H1 (cell line): ENCODE measurements at regions of chr12 and their contacts with region 1.

Region 1: GRCh38 chr12:101951002-101951670 is 73.8 kb downstream of the DRAM1 start:
- DNase-seq: no peak
- H3K4me3 ChIP-seq: no peak overlapping the region
- H3K27ac ChIP-seq: no peak overlapping the region
- H3K4me1 ChIP-seq: no peaks in the 10 kb centered on the region
- H3K27me3 ChIP-seq: no peaks in the 10 kb centered on the region
- CTCF ChIP-seq: no peak
- EP300 ChIP-seq: no peak
- POLR2A ChIP-seq: no peak
- RAD21 ChIP-seq: no peak

Region 2: GRCh38 chr12:101939856-101940265 is 11.3 kb before region 1 on chr12:
- CTCF ChIA-PET with region 1: interaction called, 15 read pairs
- POLR2A ChIA-PET with region 1: no interaction called
- DNase-seq: peak; percentile 41 to 55
- H3K4me3 ChIP-seq: no peak overlapping the region
- H3K27ac ChIP-seq: no peak overlapping the region
- H3K4me1 ChIP-seq: no peaks in the 10 kb centered on the region
- H3K27me3 ChIP-seq: no peaks in the 10 kb centered on the region; a peak in 1 of 7 replicates
- CTCF ChIP-seq: peak; percentile 36 to 79 (median 79)
- EP300 ChIP-seq: no peak
- POLR2A ChIP-seq: no peak
- RAD21 ChIP-seq: peak; percentile 94 to 95

Region 3: GRCh38 chr12:102033991-102034745 is 83.0 kb after region 1 on chr12:
- CTCF ChIA-PET with region 1: no interaction called
- POLR2A ChIA-PET with region 1: no interaction called
- DNase-seq: no peak
- H3K4me3 ChIP-seq: no peak overlapping the region
- H3K27ac ChIP-seq: no peak overlapping the region
- H3K4me1 ChIP-seq: no peaks in the 10 kb centered on the region
- H3K27me3 ChIP-seq: no peaks in the 10 kb centered on the region
- CTCF ChIP-seq: no peak
- EP300 ChIP-seq: no peak
- POLR2A ChIP-seq: no peak
- RAD21 ChIP-seq: no peak